Endothelial cell of umbilical vein (primary cell): ENCODE measurements at regions of chr10 and their contacts with region 1.

Region 1: GRCh38 chr10:61475449-61475873 is 22.3 kb upstream of the TMEM26 start:
- DNase-seq: peak; percentile 94
- H3K4me3 ChIP-seq: no peak overlapping the region
- H3K27ac ChIP-seq: peak overlapping the region; percentile 55
- H3K4me1 ChIP-seq: peaks cover 26% of the 10 kb centered on the region
- H3K27me3 ChIP-seq: no peaks in the 10 kb centered on the region
- CTCF ChIP-seq: no peak
- POLR2A ChIP-seq: no peak

Region 2: DNA sequence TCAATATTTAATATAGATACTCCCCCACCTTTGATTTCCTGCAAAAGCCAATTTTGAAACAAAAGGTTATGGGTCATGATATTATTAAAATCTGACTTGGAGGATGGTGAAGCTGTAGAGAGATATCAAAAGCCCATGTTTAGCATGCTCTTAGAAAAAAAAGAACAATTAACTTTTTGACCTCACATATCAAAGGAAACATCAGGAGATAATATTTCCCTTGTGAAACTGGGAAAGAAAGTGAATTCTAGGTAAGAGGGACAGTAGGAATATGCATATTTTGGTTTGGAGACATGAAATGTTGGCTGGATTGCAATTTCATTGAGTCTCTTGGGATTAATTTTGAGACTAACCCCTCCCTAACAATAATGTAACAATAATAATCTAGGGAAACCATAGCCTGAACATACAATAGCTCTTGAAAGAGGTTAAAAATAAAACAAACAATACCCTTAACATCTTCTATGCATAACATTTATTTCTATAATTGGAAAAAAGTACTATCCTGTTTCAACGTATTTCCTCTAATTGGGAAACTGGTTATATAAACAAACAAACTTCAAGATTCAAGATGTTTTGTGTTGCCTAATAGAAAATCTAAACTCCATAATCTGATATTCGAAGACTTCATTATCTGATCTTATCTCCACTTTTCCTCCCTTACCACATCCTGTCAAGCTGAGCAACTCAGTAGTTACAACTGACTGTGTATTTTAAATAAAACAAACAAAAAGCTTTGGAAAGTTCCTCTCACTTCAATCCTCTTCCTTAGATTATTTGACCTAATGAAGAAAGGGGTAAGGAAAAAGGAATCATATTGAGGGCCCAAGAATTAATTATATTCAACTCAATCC is 37.1 kb before region 1 on chr10:
- CTCF ChIA-PET with region 1: no interaction called
- POLR2A ChIA-PET with region 1: no interaction called
- dilution Hi-C with region 1: no loop called
- intact Hi-C with region 1: loop called (anchors 1 kb)
- DNase-seq: peak; percentile 66
- H3K4me3 ChIP-seq: no peak overlapping the region
- H3K27ac ChIP-seq: no peak overlapping the region
- H3K4me1 ChIP-seq: peaks cover 16% of the 10 kb centered on the region
- H3K27me3 ChIP-seq: no peaks in the 10 kb centered on the region
- CTCF ChIP-seq: no peak
- POLR2A ChIP-seq: no peak